Tibial artery (tissue), 4 donors: ENCODE measurements at regions of chr19 and their contacts with region 1.

Region 1: DNA sequence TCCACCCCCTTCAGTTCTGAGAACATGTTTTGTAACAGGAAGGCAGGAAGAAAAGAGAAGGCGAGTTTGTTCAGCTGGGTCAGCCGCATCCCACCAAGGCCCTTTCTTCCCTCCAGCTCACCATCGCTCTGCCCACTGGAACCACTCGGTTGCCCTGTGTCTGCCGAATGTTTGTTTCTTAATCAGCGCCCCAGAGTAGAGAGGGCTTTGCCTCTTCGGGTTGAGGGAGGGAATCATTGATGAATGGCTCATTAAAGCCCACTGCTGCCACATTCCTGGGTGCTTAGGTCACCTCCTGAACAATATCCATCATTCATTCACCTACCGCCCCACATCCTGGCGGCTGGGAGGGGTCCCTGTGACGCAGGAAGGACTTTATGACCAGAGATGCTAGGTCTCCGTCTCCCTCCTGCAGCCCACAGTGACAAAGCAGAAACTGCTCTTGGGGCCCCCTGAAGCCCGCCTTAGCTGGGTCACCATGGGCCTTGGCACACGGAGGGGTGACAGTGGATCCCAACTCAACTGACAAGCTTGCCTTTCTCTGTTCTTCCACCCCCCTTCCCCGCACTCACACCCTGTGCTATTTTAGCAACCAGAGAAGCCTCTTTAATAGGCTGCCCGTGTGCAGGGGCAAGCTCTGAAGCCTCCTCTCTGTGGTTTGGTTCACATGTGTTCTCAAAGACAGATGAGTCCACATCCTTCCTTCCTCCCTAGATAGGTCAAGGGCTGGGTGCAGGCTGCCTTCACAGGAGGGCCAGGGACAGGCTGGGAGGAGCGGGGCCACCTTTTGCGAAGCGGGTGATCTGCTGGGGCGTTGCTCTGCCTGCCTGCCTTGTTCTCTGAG is 46.2 kb downstream of the ACTN4 start:
- DNase-seq: no peak
- H3K4me3 ChIP-seq: no peak overlapping the region
- H3K27ac ChIP-seq: peak overlapping the region; percentile 91 to 94
- H3K4me1 ChIP-seq: peaks cover 20 to 98% (median 95%) of the 10 kb centered on the region in 4 donors
- H3K27me3 ChIP-seq: no peaks in the 10 kb centered on the region
- CTCF ChIP-seq: no peak

Region 2: GRCh38 chr19:38658462-38659306 is 34.9 kb before region 1 on chr19:
- intact Hi-C with region 1: loop called (anchors 5 kb)
- DNase-seq: peak; percentile 56 to 82
- H3K4me3 ChIP-seq: peak overlapping the region; percentile 27 to 32
- H3K27ac ChIP-seq: peak overlapping the region; percentile 94 to 97
- H3K4me1 ChIP-seq: peaks cover 14 to 100% (median 96%) of the 10 kb centered on the region in 4 donors
- H3K27me3 ChIP-seq: no peaks in the 10 kb centered on the region
- CTCF ChIP-seq: no peak